CD8-positive, alpha-beta T cell (primary cell): ENCODE measurements at regions of chr5 and their contacts with region 1.

Region 1: GRCh38 chr5:141923448-141924352 is at the start of gene DELE1:
- DNase-seq: peak; percentile 77 to 95 (median 91)
- ATAC-seq: peak; percentile 93
- H3K4me3 ChIP-seq: peak within 1 kb of the TSS; percentile 65 to 88
- H3K4me3 Mint-ChIP-seq: peak within 1 kb of the TSS; percentile 95
- H3K27ac ChIP-seq: peak within 1 kb of the TSS; percentile 98
- H3K27ac Mint-ChIP-seq: peak within 1 kb of the TSS; percentile 98
- H3K4me1 ChIP-seq: peaks cover 16% of the 10 kb centered on the region
- H3K4me1 Mint-ChIP-seq: peaks cover 40% of the 10 kb centered on the region
- H3K27me3 ChIP-seq: no peaks in the 10 kb centered on the region
- H3K27me3 Mint-ChIP-seq: no peaks in the 10 kb centered on the region
- CTCF ChIP-seq: no peak
- total RNA-seq, gene DELE1: 61.7 to 65.0 TPM

Region 2: DNA sequence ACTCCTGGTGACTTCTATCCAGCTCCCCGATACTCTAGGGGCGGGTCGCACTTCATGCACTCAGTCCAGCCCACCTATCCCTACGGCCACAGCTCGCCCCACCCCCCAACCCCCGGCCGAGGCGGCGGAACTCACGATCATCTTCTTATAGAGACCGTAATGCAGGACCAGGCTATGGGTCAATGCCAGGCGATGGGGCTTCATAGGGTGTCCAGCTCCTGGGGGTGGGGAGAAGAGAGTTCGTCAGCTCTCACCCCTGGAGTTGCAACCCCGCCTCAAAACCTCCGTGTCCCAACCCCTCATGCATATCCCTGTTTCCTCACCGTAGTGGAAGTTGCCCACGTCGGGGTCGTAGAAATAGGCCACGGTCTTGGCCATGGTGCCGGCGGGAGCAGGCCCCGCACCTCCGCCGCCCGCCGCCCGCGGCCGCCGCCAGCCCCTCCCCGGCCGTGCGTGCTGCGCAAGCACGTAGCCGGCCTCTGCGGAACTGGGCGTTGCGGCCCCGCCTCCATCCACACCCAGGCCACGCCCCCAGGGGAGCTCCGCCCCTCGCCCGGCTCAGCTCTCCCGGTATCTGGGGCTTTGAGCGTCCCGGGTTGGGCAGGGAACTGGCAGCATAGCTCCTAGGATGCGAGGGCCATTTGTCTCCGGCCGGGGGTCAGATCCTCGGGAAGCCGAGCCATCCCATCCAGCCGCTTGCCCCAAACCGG is 287.1 kb before region 1 on chr5 and contains the starts of genes HDAC3 and RELL2:
- CTCF ChIA-PET with region 1: no interaction called
- POLR2A ChIA-PET with region 1: no interaction called
- intact Hi-C with region 1: loop called in 1 of 2 experiments (anchors 5 kb)
- DNase-seq: peak; percentile 88 to 97 (median 94)
- ATAC-seq: peak; percentile 89
- H3K4me3 ChIP-seq: peak within 1 kb of the TSS; percentile 98 to 99
- H3K4me3 Mint-ChIP-seq: peak within 1 kb of the TSS; percentile 92
- H3K27ac ChIP-seq: peak within 1 kb of the TSS; percentile 78 to 81
- H3K27ac Mint-ChIP-seq: peak within 1 kb of the TSS; percentile 89
- H3K4me1 ChIP-seq: peaks cover 28% of the 10 kb centered on the region
- H3K4me1 Mint-ChIP-seq: peaks cover 50% of the 10 kb centered on the region
- H3K27me3 ChIP-seq: no peaks in the 10 kb centered on the region
- H3K27me3 Mint-ChIP-seq: no peaks in the 10 kb centered on the region
- CTCF ChIP-seq: no peak
- total RNA-seq, gene HDAC3: 48.9 to 54.8 TPM
- total RNA-seq, gene RELL2: 9.5 to 9.8 TPM

Region 3: GRCh38 chr5:141701360-141702119 is 222.2 kb before region 1 on chr5:
- CTCF ChIA-PET with region 1: interaction called, 8 read pairs
- POLR2A ChIA-PET with region 1: no interaction called
- intact Hi-C with region 1: loop called in 1 of 2 experiments (anchors 1 kb)
- DNase-seq: peak in 1 of 9 experiments; percentile 30
- ATAC-seq: peak; percentile 13
- H3K4me3 ChIP-seq: peak overlapping the region; percentile 57 to 89
- H3K4me3 Mint-ChIP-seq: no peak overlapping the region
- H3K27ac ChIP-seq: no peak overlapping the region
- H3K27ac Mint-ChIP-seq: no peak overlapping the region
- H3K4me1 ChIP-seq: peaks cover 15% of the 10 kb centered on the region
- H3K4me1 Mint-ChIP-seq: peaks cover 19% of the 10 kb centered on the region
- H3K27me3 ChIP-seq: peaks cover 0 to 3% of the 10 kb centered on the region in 2 experiments
- H3K27me3 Mint-ChIP-seq: peaks cover 45% of the 10 kb centered on the region
- CTCF ChIP-seq: no peak

Region 4: DNA sequence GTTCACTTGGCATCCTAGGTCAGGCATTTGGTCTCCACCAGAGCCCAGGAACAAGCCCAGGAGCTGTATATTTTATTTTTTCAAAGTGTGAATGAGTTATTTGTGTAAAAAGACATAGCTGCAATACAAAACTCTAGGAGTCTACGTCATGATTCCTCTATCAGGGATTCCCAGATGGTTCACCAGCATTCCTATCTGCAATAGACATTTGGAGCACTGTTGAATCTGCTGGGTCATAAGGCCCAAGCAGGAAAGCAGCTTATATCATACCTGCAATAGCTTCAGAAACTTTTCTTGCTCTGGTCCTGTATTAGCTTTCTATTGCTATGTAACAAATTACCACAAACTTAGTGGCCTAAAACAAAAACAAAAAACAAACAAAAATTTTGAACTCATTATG is 16.7 kb before region 1 on chr5:
- CTCF ChIA-PET with region 1: no interaction called
- POLR2A ChIA-PET with region 1: no interaction called
- intact Hi-C with region 1: no loop called
- DNase-seq: no peak
- ATAC-seq: no peak
- H3K4me3 ChIP-seq: no peak overlapping the region
- H3K4me3 Mint-ChIP-seq: no peak overlapping the region
- H3K27ac ChIP-seq: no peak overlapping the region
- H3K27ac Mint-ChIP-seq: no peak overlapping the region
- H3K4me1 ChIP-seq: no peaks in the 10 kb centered on the region
- H3K4me1 Mint-ChIP-seq: no peaks in the 10 kb centered on the region
- H3K27me3 ChIP-seq: peaks cover 0 to 2% of the 10 kb centered on the region in 2 experiments
- H3K27me3 Mint-ChIP-seq: peaks cover 9% of the 10 kb centered on the region
- CTCF ChIP-seq: no peak

Region 5: DNA sequence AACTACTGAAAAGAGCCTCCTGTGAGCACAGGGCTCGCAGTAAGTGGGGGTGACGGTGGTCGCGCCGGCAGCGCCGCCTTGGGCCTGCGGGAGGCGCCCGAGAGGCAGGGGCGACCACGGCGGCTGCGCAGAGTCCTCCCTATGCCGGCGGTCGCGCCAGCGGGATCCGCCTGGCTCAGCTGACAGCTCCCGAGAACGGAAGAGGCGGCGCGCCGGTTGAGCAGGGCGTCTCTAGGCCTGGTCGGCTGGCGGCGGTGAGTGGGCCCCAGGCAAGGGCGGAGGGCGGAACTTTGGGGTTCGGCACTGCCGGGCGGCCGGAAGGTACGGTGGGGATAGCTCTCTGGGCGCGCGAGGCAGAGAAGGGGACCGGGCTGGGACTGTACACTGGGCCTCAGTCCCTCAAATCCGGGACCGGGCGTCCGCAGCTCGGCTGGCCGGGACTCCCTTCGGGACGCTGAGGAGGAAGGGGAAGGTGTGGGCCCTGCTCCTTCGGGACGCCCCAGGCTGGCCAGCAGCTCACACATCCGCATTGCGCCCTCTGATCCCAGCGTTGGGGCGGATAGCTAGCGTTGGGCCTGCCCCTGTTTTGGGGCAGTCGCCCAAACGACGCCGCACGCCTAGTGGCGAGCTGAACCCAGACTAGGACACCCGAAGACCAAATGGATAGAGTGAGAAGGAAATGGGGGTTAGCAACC is 45.4 kb after region 1 on chr5 and contains the start of gene RNF14:
- CTCF ChIA-PET with region 1: interaction called, 9 read pairs
- POLR2A ChIA-PET with region 1: interaction called, 11 read pairs
- intact Hi-C with region 1: loop called (anchors 1 to 2 kb)
- DNase-seq: peak; percentile 86 to 97 (median 92)
- ATAC-seq: peak; percentile 94
- H3K4me3 ChIP-seq: peak within 1 kb of the TSS; percentile 77 to 94
- H3K4me3 Mint-ChIP-seq: peak within 1 kb of the TSS; percentile 98
- H3K27ac ChIP-seq: peak within 1 kb of the TSS; percentile 80 to 97
- H3K27ac Mint-ChIP-seq: peak within 1 kb of the TSS; percentile 99
- H3K4me1 ChIP-seq: peaks cover 18% of the 10 kb centered on the region
- H3K4me1 Mint-ChIP-seq: peaks cover 27% of the 10 kb centered on the region
- H3K27me3 ChIP-seq: no peaks in the 10 kb centered on the region
- H3K27me3 Mint-ChIP-seq: no peaks in the 10 kb centered on the region
- CTCF ChIP-seq: peak; percentile 98
- total RNA-seq, gene RNF14: 11.3 to 12.8 TPM

Region 6: GRCh38 chr5:142000703-142001484 is 77.2 kb after region 1 on chr5:
- CTCF ChIA-PET with region 1: no interaction called
- POLR2A ChIA-PET with region 1: no interaction called
- intact Hi-C with region 1: no loop called
- DNase-seq: peak in 1 of 9 experiments; percentile 47
- ATAC-seq: peak; percentile 36
- H3K4me3 ChIP-seq: no peak overlapping the region
- H3K4me3 Mint-ChIP-seq: no peak overlapping the region
- H3K27ac ChIP-seq: no peak overlapping the region
- H3K27ac Mint-ChIP-seq: peak overlapping the region; percentile 71
- H3K4me1 ChIP-seq: peaks cover 16% of the 10 kb centered on the region
- H3K4me1 Mint-ChIP-seq: peaks cover 20% of the 10 kb centered on the region
- H3K27me3 ChIP-seq: no peaks in the 10 kb centered on the region
- H3K27me3 Mint-ChIP-seq: no peaks in the 10 kb centered on the region
- CTCF ChIP-seq: no peak

Region 7: DNA sequence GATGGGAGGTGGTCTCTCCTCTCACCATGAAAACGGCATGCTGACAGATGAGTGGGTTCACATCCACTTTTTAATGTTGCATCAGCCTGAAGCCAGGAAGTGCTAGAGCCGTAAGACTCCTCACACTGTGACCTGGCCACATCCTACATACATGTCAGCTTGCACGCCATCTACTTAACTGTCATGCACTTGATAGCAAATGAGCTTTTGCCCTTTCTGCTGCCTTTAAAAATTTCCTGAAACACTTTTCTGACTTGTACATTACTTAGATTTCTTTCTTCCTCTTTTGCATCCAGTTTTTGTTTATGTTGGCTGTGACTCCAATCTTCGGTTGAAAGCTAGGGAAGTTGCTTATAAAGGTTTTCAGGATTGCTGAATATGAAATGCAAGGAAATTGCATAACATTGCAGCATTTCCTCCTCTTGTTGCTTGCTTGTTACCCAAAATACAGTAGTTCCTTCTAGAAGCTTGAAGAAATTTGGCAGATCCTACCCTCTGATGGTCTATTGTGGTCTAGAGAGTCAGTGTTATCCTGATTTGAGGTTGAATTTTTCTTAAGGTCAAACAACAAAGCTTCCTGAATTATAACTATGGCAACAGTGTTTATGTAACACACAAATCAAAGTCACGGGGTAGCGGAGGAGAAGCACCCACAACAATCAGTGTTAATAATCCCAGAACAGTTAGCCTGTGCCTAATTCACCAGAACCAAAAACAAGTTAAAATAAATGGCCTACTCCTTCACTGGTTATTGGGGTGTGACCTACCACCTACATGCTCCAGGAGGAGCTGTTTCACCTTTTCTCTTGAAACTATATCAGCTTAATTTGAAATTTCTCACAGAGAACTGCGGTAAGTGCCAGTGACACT is 1079.0 kb after region 1 on chr5:
- CTCF ChIA-PET with region 1: no interaction called
- POLR2A ChIA-PET with region 1: no interaction called
- intact Hi-C with region 1: loop called in 1 of 2 experiments (anchors 5 kb)
- DNase-seq: peak; percentile 16 to 94 (median 58)
- ATAC-seq: peak; percentile 85
- H3K4me3 ChIP-seq: peak overlapping the region in 1 of 2 experiments; percentile 1
- H3K4me3 Mint-ChIP-seq: peak overlapping the region; percentile 56
- H3K27ac ChIP-seq: peak overlapping the region; percentile 83 to 89
- H3K27ac Mint-ChIP-seq: peak overlapping the region; percentile 87
- H3K4me1 ChIP-seq: peaks cover 43% of the 10 kb centered on the region
- H3K4me1 Mint-ChIP-seq: peaks cover 70% of the 10 kb centered on the region
- H3K27me3 ChIP-seq: no peaks in the 10 kb centered on the region
- H3K27me3 Mint-ChIP-seq: no peaks in the 10 kb centered on the region
- CTCF ChIP-seq: peak; percentile 70